ENCODE measurements at regions of chr4 and their contacts with region 1.

Region 1: GRCh38 chr4:143482840-143483239 is 30.7 kb upstream of the SMARCA5 start:
- DNase-seq: peak; percentile 2
- ATAC-seq: no peak
- H3K4me3 ChIP-seq: no peak overlapping the region
- H3K27ac ChIP-seq: no peak overlapping the region
- H3K4me1 ChIP-seq: no peaks in the 10 kb centered on the region
- H3K27me3 ChIP-seq: no peaks in the 10 kb centered on the region
- CTCF ChIP-seq: peak; percentile 37; the same call in 1 of the 2 replicates

Region 2: DNA sequence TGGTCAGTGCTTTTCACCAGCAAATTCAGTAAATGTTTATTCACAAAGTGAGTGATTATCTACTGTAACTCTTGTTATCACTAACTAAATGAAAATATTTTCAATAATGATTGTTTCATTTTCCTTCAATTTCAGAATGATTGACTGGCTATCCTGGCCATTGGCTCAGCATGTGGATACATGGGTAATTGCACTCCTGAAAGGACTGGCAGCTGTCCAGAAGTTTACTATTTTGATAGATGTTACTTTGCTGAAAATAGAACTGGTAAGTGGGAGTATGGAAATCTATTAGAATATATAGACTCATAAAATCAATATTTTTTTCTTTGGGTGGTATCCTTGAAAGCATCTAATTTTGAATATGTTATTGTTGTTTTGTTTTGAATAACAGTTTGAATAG is 287.3 kb before region 1 on chr4:
- CTCF ChIA-PET with region 1: no interaction called
- POLR2A ChIA-PET with region 1: no interaction called
- in situ Hi-C with region 1: no loop called
- intact Hi-C with region 1: no loop called
- DNase-seq: no peak
- ATAC-seq: no peak
- H3K4me3 ChIP-seq: no peak overlapping the region
- H3K27ac ChIP-seq: no peak overlapping the region
- H3K4me1 ChIP-seq: no peaks in the 10 kb centered on the region
- H3K27me3 ChIP-seq: no peaks in the 10 kb centered on the region
- CTCF ChIP-seq: no peak

Region 3: DNA sequence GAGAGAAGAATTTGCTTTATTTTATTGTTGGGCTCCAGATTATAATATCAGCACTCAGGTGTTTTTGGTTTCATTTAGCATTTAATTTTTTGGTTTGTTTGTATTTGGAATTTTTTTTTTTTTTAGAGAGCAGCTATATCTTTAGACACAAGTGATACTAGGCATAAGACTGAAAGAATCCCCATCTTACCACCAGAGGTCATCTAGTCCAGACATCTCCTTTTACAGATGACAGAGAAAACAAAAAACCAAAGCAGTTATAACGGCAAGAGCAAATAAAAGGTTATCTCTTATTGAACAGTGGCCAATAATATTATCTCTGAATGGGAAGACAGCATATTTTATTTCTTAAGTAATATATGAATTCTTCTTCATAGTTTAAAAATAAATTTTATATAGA is 275.3 kb before region 1 on chr4:
- CTCF ChIA-PET with region 1: no interaction called
- POLR2A ChIA-PET with region 1: no interaction called
- in situ Hi-C with region 1: no loop called
- intact Hi-C with region 1: loop called (anchors 5 kb)
- DNase-seq: no peak
- ATAC-seq: no peak
- H3K4me3 ChIP-seq: no peak overlapping the region
- H3K27ac ChIP-seq: no peak overlapping the region
- H3K4me1 ChIP-seq: no peaks in the 10 kb centered on the region
- H3K27me3 ChIP-seq: no peaks in the 10 kb centered on the region
- CTCF ChIP-seq: no peak; the same call in 1 of the 2 replicates

Region 4: GRCh38 chr4:143399113-143399949 is 83.5 kb before region 1 on chr4:
- CTCF ChIA-PET with region 1: no interaction called
- POLR2A ChIA-PET with region 1: no interaction called
- in situ Hi-C with region 1: no loop called
- intact Hi-C with region 1: loop called (anchors 5 kb)
- DNase-seq: peak; percentile 22
- ATAC-seq: no peak
- H3K4me3 ChIP-seq: no peak overlapping the region
- H3K27ac ChIP-seq: no peak overlapping the region
- H3K4me1 ChIP-seq: no peaks in the 10 kb centered on the region
- H3K27me3 ChIP-seq: no peaks in the 10 kb centered on the region
- CTCF ChIP-seq: peak; percentile 62; the same call in 1 of the 2 replicates

Measured in Panc1 (cell line).